ENCODE measurements at regions of chr1 and their contacts with region 1.

Region 1: GRCh38 chr1:241582921-241583331 is 50.7 kb downstream of the KMO start:
- DNase-seq: peak; percentile 97
- H3K4me3 ChIP-seq: no peak overlapping the region
- H3K27ac ChIP-seq: peak overlapping the region; percentile 92
- H3K4me1 ChIP-seq: peaks cover 22% of the 10 kb centered on the region
- H3K27me3 ChIP-seq: no peaks in the 10 kb centered on the region
- CTCF ChIP-seq: no peak

Region 2: DNA sequence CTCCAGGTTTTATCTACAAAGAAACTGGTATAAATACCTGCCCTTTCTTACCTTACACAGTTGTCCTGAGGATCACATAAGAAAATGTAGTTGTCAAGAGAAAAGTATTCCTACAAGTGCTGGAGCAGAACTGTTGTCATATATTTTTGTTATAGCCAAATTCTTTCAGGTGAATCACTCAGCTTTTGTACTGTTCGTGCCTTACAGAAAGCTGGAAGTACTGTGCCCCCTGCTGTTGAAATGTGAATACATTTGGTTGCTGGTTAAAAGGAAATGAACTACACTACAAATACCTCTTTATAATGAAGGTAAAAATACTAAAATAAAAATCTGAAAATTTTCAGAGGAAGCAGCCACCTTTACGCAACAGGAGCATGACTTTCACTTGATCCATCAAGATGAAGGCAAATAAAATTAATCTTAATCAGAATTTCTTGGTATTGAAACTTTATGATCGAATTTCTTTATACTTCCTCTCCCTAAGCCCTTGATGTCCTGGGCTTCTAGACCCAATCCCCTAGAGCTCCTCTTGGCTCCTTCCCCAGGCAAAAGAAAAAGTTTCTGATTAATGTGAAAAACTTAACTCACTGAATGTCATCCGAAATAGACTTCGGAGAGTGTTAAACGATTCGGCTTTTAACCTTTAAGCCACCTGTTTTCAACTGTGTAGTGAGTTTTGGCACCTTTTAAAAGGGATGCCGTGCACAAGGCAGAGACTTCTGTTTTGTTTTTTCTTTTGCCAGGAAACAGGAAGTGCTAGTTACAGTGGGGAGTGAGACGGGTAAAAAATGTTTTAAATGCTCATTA is 44.7 kb after region 1 on chr1:
- CTCF ChIA-PET with region 1: no interaction called
- dilution Hi-C with region 1: no loop called
- in situ Hi-C with region 1: no loop called
- intact Hi-C with region 1: loop called (anchors 2 kb)
- DNase-seq: peak; percentile 70
- H3K4me3 ChIP-seq: no peak overlapping the region
- H3K27ac ChIP-seq: no peak overlapping the region
- H3K4me1 ChIP-seq: no peaks in the 10 kb centered on the region
- H3K27me3 ChIP-seq: no peaks in the 10 kb centered on the region
- CTCF ChIP-seq: peak; percentile 68 to 75

Measured in mammary epithelial cell (primary cell).